Common myeloid progenitor, CD34-positive (primary cell): ENCODE measurements at regions of chr1 and their contacts with region 1.

Region 1: GRCh38 chr1:151888972-151889570 is 20.2 kb downstream of the THEM4 start:
- DNase-seq: peak; percentile 26 to 46 (median 44)
- H3K4me3 ChIP-seq: no peak overlapping the region
- H3K27ac ChIP-seq: no peak overlapping the region
- H3K4me1 ChIP-seq: no peaks in the 10 kb centered on the region
- H3K27me3 ChIP-seq: no peaks in the 10 kb centered on the region

Region 2: GRCh38 chr1:151820940-151821339 is 68.1 kb before region 1 on chr1:
- CTCF ChIA-PET with region 1: no interaction called
- POLR2A ChIA-PET with region 1: no interaction called
- DNase-seq: peak; percentile 46 to 80 (median 78)
- H3K4me3 ChIP-seq: peak overlapping the region in 1 of 7 experiments; percentile 12
- H3K27ac ChIP-seq: no peak overlapping the region
- H3K4me1 ChIP-seq: peaks cover 6 to 58% (median 46%) of the 10 kb centered on the region in 4 experiments
- H3K27me3 ChIP-seq: no peaks in the 10 kb centered on the region

Region 3: DNA sequence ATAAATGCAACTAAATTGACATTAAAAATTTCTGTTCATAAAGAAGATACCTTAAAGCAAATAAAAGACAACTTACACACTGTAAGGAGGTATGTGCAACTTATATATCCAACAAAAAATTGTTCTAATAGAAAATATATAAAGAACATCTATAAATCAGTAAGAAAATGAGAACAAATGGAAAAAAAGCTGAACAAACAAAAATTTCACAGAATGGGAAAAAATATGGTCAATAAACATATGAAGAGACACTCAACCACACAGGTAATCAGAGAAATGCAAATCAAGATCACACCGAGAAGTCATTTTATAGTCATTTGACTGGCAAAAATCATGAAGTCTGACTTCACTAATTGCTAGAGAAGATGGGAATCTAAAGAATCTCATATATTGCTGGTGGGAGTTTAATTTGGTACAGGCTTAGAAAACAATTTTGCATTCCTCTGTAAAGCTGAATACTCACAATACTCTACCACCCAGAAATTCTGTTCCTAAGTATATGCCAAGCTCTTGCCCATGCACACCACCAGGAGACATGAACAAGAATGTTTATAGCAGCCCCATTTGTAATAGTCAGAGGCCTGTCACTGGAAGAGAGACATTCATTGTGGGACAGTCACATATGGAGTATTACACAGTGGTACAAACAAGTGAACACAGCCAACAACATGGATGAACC is 13.5 kb before region 1 on chr1:
- CTCF ChIA-PET with region 1: interaction called, 11 read pairs
- POLR2A ChIA-PET with region 1: no interaction called
- DNase-seq: no peak
- H3K4me3 ChIP-seq: no peak overlapping the region
- H3K27ac ChIP-seq: no peak overlapping the region
- H3K4me1 ChIP-seq: peaks cover 0 to 11% (median 9%) of the 10 kb centered on the region in 4 experiments
- H3K27me3 ChIP-seq: no peaks in the 10 kb centered on the region

Region 4: GRCh38 chr1:151993654-151994496 is 104.8 kb after region 1 on chr1 and contains the start of gene S100A10:
- CTCF ChIA-PET with region 1: interaction called, 64 read pairs
- POLR2A ChIA-PET with region 1: no interaction called
- DNase-seq: peak; percentile 50 to 77 (median 70)
- H3K4me3 ChIP-seq: peak within 1 kb of the TSS; percentile 28 to 86 (median 72)
- H3K27ac ChIP-seq: peak within 1 kb of the TSS in 1 of 2 experiments; percentile 7
- H3K4me1 ChIP-seq: peaks cover 0 to 31% (median 22%) of the 10 kb centered on the region in 4 experiments
- H3K27me3 ChIP-seq: peaks cover 0 to 46% (median 5%) of the 10 kb centered on the region in 5 experiments